GM12878 (cell line): ENCODE measurements at regions of chr3 and their contacts with region 1.

Region 1: GRCh38 chr3:122383771-122384697 is at the start of gene FAM162A:
- DNase-seq: peak; percentile 83
- ATAC-seq: peak; percentile 95
- H3K4me3 ChIP-seq: peak within 1 kb of the TSS; percentile 76
- H3K27ac ChIP-seq: peak within 1 kb of the TSS; percentile 82
- H3K4me1 ChIP-seq: peaks cover 16% of the 10 kb centered on the region
- H3K27me3 ChIP-seq: no peaks in the 10 kb centered on the region
- CTCF ChIP-seq: peak; percentile 55 to 77 (median 61); a peak in 5 of 6 replicates
- EP300 ChIP-seq: peak in 1 of 2 experiments; percentile 8; a peak in 1 of 4 replicates
- POLR2A ChIP-seq: peak; percentile 96
- RAD21 ChIP-seq: peak; percentile 38
- polyA plus RNA-seq, gene FAM162A: 290 to 297 TPM

Region 2: GRCh38 chr3:121735047-121735696 is 648.9 kb before region 1 on chr3:
- CTCF ChIA-PET with region 1: no interaction called
- POLR2A ChIA-PET with region 1: no interaction called
- RAD21 ChIA-PET with region 1: no interaction called
- SMC1A ChIA-PET with region 1: no interaction called
- in situ Hi-C with region 1: no loop called
- intact Hi-C with region 1: no loop called
- DNase-seq: peak; percentile 48
- ATAC-seq: peak; percentile 97
- H3K4me3 ChIP-seq: no peak overlapping the region
- H3K27ac ChIP-seq: peak overlapping the region; percentile 44; the same call in 1 of the 2 replicates
- H3K4me1 ChIP-seq: peaks cover 30% of the 10 kb centered on the region
- H3K27me3 ChIP-seq: no peaks in the 10 kb centered on the region
- CTCF ChIP-seq: no peak
- EP300 ChIP-seq: no peak
- POLR2A ChIP-seq: no peak
- RAD21 ChIP-seq: no peak

Region 3: DNA sequence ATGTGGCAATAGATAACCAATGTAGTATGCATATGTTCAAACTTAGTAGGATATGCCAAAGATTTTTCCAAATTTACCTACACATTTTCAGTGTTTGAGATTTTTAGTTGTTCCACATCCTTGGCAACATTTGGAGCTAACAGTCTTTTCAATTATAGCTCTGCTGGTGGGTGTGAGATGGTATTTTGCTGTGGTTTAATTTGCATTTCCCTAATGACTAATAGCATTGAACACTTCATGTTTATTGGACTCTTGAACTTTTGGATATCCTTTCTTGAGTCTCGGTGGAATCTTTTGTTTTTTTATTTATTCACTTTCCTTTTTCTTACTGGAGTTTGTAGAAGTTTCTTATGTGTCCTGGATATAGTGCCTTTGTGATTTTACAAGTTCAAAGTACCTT is 351.0 kb before region 1 on chr3:
- CTCF ChIA-PET with region 1: no interaction called
- POLR2A ChIA-PET with region 1: no interaction called
- RAD21 ChIA-PET with region 1: no interaction called
- SMC1A ChIA-PET with region 1: no interaction called
- in situ Hi-C with region 1: no loop called
- intact Hi-C with region 1: no loop called
- DNase-seq: no peak
- ATAC-seq: peak; percentile 11; the same call in 2 of the 3 replicates
- H3K4me3 ChIP-seq: no peak overlapping the region
- H3K27ac ChIP-seq: no peak overlapping the region
- H3K4me1 ChIP-seq: peaks cover 28% of the 10 kb centered on the region
- H3K27me3 ChIP-seq: no peaks in the 10 kb centered on the region
- CTCF ChIP-seq: no peak
- EP300 ChIP-seq: no peak
- POLR2A ChIP-seq: no peak
- RAD21 ChIP-seq: no peak

Region 4: GRCh38 chr3:122403489-122403888 is 19.5 kb after region 1 on chr3:
- CTCF ChIA-PET with region 1: interaction called, 28 read pairs
- POLR2A ChIA-PET with region 1: interaction called, 4 read pairs
- RAD21 ChIA-PET with region 1: interaction called, 6 read pairs
- SMC1A ChIA-PET with region 1: interaction called, 70 read pairs
- in situ Hi-C with region 1: no loop called
- intact Hi-C with region 1: no loop called
- DNase-seq: no peak
- ATAC-seq: no peak
- H3K4me3 ChIP-seq: no peak overlapping the region
- H3K27ac ChIP-seq: no peak overlapping the region
- H3K4me1 ChIP-seq: no peaks in the 10 kb centered on the region
- H3K27me3 ChIP-seq: no peaks in the 10 kb centered on the region
- CTCF ChIP-seq: no peak
- EP300 ChIP-seq: no peak
- POLR2A ChIP-seq: no peak
- RAD21 ChIP-seq: no peak